A673 (cell line): ENCODE measurements at regions of chr11 and their contacts with region 1.

Region 1: GRCh38 chr11:63635762-63636465 is 21.7 kb upstream of the PLAAT3 start:
- DNase-seq: peak; percentile 83
- H3K4me3 ChIP-seq: no peak overlapping the region
- H3K27ac ChIP-seq: no peak overlapping the region
- H3K4me1 ChIP-seq: no peaks in the 10 kb centered on the region
- H3K27me3 ChIP-seq: no peaks in the 10 kb centered on the region
- CTCF ChIP-seq: peak; percentile 94

Region 2: DNA sequence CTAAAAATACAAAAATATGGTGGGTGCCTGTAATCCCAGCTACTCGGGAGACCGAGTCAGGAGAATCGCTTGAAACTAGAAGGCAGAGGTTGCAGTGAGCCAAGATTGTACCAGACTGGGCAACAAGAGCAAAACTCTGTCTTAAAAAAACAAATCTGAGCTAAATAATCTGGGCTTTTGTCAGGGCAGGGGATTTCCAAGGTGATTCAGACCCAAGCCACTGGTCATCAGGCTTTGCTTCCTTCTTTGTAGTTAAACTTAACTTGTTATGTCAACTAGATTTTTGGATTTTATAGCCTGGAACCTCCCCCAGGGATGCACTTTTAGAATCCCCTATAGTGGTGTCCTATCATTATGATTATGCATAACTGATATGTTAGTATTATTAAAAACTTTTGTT is 593.3 kb before region 1 on chr11:
- CTCF ChIA-PET with region 1: no interaction called
- POLR2A ChIA-PET with region 1: no interaction called
- intact Hi-C with region 1: loop called (anchors 5 kb)
- DNase-seq: no peak
- H3K4me3 ChIP-seq: no peak overlapping the region
- H3K27ac ChIP-seq: no peak overlapping the region
- H3K4me1 ChIP-seq: no peaks in the 10 kb centered on the region
- H3K27me3 ChIP-seq: no peaks in the 10 kb centered on the region
- CTCF ChIP-seq: no peak

Region 3: GRCh38 chr11:63478896-63479295 is 157.0 kb before region 1 on chr11:
- CTCF ChIA-PET with region 1: interaction called, 19 read pairs
- POLR2A ChIA-PET with region 1: no interaction called
- intact Hi-C with region 1: loop called (anchors 1 kb)
- DNase-seq: peak; percentile 83
- H3K4me3 ChIP-seq: no peak overlapping the region
- H3K27ac ChIP-seq: no peak overlapping the region
- H3K4me1 ChIP-seq: no peaks in the 10 kb centered on the region
- H3K27me3 ChIP-seq: no peaks in the 10 kb centered on the region
- CTCF ChIP-seq: peak; percentile 97

Region 4: GRCh38 chr11:63738720-63739360 is 102.9 kb after region 1 on chr11:
- CTCF ChIA-PET with region 1: interaction called, 4 read pairs
- POLR2A ChIA-PET with region 1: no interaction called
- intact Hi-C with region 1: loop called (anchors 2 kb)
- DNase-seq: peak; percentile 87
- H3K4me3 ChIP-seq: no peak overlapping the region
- H3K27ac ChIP-seq: no peak overlapping the region
- H3K4me1 ChIP-seq: peaks cover 14% of the 10 kb centered on the region
- H3K27me3 ChIP-seq: no peaks in the 10 kb centered on the region
- CTCF ChIP-seq: peak; percentile 98